Aorta (tissue), 5 donors: ENCODE measurements at regions of chr1 and their contacts with region 1.

Region 1: GRCh38 chr1:92960395-92961130 is 699 bp downstream of the DIPK1A start:
- DNase-seq: peak; percentile 72 to 78
- ATAC-seq: peak; percentile 82
- H3K4me3 ChIP-seq: peak overlapping the region; percentile 78 to 97
- H3K27ac ChIP-seq: peak overlapping the region; percentile 88 to 98
- H3K4me1 ChIP-seq: peaks cover 2 to 3% of the 10 kb centered on the region in 2 donors
- H3K27me3 ChIP-seq: no peaks in the 10 kb centered on the region

Region 2: GRCh38 chr1:92858564-92859399 is 101.8 kb before region 1 on chr1:
- intact Hi-C with region 1: loop called in 1 of 2 experiments (anchors 10 kb)
- DNase-seq: no peak
- ATAC-seq: peak; percentile 91
- H3K4me3 ChIP-seq: peak overlapping the region in 1 of 2 donors; percentile 41
- H3K27ac ChIP-seq: no peak overlapping the region
- H3K4me1 ChIP-seq: no peaks in the 10 kb centered on the region
- H3K27me3 ChIP-seq: no peaks in the 10 kb centered on the region

Region 3: DNA sequence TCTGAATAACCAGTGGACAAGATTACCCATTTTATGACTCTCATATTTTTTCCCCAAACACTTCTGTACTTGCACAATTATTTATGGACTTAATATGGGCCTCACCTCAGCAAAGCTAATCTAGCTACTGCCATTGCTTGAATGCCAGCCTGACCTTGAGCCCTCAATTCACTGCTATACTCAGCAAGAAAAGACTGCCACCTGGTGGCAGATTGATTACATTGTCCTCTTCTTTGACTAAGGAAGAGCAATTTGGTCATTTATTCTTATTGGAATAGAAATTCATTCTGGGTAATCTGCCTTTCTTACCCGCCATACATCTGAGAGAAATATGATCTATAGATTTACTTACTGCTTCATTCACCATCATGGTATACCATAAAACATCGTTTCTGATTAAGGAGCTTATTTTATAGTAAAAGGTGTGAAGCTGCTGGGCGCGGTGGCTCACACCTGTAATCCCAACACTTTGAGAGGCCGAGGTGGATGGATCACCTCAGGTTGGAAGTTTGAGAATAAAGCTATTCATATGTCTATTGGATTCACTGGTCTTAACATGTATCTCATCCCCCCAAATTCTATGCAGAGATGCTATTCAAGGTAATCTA is 33.6 kb after region 1 on chr1:
- intact Hi-C with region 1: loop called (anchors 2 to 5 kb)
- DNase-seq: peak in 1 of 2 donors; percentile 55
- ATAC-seq: peak; percentile 89
- H3K4me3 ChIP-seq: no peak overlapping the region
- H3K27ac ChIP-seq: no peak overlapping the region
- H3K4me1 ChIP-seq: no peaks in the 10 kb centered on the region
- H3K27me3 ChIP-seq: no peaks in the 10 kb centered on the region

Region 4: DNA sequence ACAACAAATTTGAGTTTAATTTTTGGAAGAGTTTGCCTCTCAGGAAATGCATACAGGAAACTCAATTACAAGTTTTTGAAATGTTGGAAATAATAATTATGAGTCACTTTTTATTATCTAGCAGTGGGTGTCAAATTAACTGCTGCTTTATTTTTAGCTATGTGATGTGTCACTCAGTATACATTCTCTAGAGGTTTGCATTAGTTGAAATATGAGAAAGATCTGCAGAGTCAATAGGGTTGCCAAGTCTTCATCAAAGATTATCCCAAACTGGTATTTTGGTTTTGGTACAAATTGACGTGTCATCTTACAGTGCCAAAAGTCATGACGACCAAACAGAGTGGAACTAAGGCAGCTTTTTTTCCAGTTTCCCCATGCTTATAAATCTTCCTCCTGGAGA is 55.0 kb after region 1 on chr1:
- intact Hi-C with region 1: no loop called
- DNase-seq: no peak
- ATAC-seq: no peak
- H3K4me3 ChIP-seq: no peak overlapping the region
- H3K27ac ChIP-seq: no peak overlapping the region
- H3K4me1 ChIP-seq: peaks cover 0 to 3% of the 10 kb centered on the region in 2 donors
- H3K27me3 ChIP-seq: no peaks in the 10 kb centered on the region

Region 5: DNA sequence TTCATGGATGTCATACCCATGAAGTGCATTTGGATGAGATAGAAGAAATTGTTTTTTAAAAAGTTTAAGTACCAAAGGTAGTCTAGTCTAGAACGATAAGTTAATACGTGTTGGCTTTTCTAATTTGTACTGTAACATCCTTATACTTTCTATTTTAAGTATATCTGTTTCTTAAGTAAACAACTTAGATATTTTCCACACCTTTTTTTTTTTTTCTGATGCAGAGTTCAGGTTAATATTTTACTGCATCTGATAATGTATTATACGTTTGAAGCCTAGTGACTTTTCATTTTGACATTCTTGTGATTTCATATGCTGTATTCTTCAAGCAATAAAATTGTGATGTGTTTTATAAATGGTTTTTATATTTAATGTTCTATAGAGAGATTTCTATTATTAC is 401.7 kb after region 1 on chr1:
- intact Hi-C with region 1: no loop called
- DNase-seq: no peak
- ATAC-seq: no peak
- H3K4me3 ChIP-seq: no peak overlapping the region
- H3K27ac ChIP-seq: no peak overlapping the region
- H3K4me1 ChIP-seq: no peaks in the 10 kb centered on the region
- H3K27me3 ChIP-seq: no peaks in the 10 kb centered on the region